ENCODE measurements at regions of chr9 and their contacts with region 1.

Region 1: DNA sequence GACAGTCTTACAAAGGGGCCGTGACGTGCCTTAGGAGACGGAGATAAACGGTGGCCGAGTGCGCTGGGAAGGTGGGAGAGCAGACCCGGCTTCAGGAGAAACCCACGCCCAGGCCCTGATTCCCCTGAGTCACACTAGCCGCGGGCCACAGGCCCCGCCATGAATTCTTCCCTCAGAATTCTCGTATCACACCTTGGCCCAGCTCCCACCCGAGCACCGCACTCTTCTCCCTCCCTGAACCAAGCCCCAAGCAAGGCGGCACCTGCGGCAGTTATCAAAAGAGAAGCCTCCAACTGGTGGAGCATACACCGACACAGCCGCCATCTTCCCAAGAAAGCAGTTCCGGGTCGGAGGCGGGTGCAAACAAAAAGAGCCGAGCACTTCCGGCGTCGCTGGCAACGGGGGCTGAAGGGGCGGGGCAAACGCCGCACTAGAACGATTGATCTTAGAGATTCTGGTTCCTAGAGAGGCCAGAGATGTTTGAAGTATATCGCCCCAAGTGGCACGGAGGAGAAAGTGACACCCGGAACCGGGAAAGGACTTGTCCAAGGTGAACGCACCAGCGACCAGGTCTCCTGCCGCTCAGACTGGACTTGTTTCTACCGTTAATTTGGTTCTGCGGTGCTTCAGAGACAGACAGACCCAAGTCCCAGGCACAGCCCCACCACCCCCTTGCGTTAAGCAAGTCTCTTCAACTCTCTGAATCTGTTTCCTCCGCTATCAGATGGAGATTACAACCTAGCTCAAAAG is at the start of gene PSMB7:
- DNase-seq: peak; percentile 95
- CTCF ChIP-seq: peak; percentile 69

Region 2: GRCh38 chr9:124537926-124538325 is 122.6 kb after region 1 on chr9:
- CTCF ChIA-PET with region 1: interaction called, 115 read pairs
- POLR2A ChIA-PET with region 1: no interaction called
- DNase-seq: no peak
- CTCF ChIP-seq: no peak